Naive thymus-derived CD4-positive, alpha-beta T cell (primary cell): ENCODE measurements at regions of chr3 and their contacts with region 1.

Region 1: GRCh38 chr3:14791343-14791945 is 27.3 kb upstream of the FGD5 start:
- DNase-seq: peak; percentile 23 to 54 (median 33)
- ATAC-seq: peak; percentile 62
- H3K4me3 ChIP-seq: no peak overlapping the region
- H3K4me3 Mint-ChIP-seq: no peak overlapping the region
- H3K27ac ChIP-seq: no peak overlapping the region
- H3K27ac Mint-ChIP-seq: peak overlapping the region in 2 of 9 donors; percentile 14 to 49
- H3K4me1 ChIP-seq: no peaks in the 10 kb centered on the region
- H3K4me1 Mint-ChIP-seq: peaks cover 0 to 4% (median 0%) of the 10 kb centered on the region in 7 donors
- H3K27me3 ChIP-seq: no peaks in the 10 kb centered on the region
- H3K27me3 Mint-ChIP-seq: peaks cover 7 to 29% (median 26%) of the 10 kb centered on the region in 5 donors

Region 2: GRCh38 chr3:14626881-14627411 is 164.5 kb before region 1 on chr3:
- CTCF ChIA-PET with region 1: no interaction called
- POLR2A ChIA-PET with region 1: no interaction called
- intact Hi-C with region 1: no loop called
- DNase-seq: no peak
- ATAC-seq: no peak
- H3K4me3 ChIP-seq: no peak overlapping the region
- H3K4me3 Mint-ChIP-seq: no peak overlapping the region
- H3K27ac ChIP-seq: no peak overlapping the region
- H3K27ac Mint-ChIP-seq: no peak overlapping the region
- H3K4me1 ChIP-seq: no peaks in the 10 kb centered on the region
- H3K4me1 Mint-ChIP-seq: no peaks in the 10 kb centered on the region
- H3K27me3 ChIP-seq: no peaks in the 10 kb centered on the region
- H3K27me3 Mint-ChIP-seq: peaks cover 0 to 12% (median 5%) of the 10 kb centered on the region in 5 donors

Region 3: DNA sequence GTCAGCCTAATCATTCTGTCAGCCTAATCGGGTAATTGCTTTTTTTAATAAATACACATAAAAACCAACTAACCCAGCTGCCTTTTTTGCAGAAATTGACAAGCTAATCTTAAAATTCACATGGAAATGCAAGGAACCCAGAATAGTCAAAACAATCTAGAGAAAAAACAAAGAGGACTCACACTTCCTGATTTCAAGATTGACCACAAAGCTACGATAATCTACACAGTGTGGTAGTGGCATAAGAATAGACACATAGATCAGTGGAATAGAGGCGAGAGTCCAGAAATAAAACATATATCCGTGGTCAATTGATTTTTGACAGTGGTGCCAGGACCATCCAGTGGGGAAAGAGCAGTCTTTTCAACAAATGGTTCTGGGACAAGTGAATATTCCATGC is 118.9 kb before region 1 on chr3:
- CTCF ChIA-PET with region 1: no interaction called
- POLR2A ChIA-PET with region 1: no interaction called
- intact Hi-C with region 1: loop called (anchors 2 to 10 kb)
- DNase-seq: no peak
- ATAC-seq: no peak
- H3K4me3 ChIP-seq: no peak overlapping the region
- H3K4me3 Mint-ChIP-seq: no peak overlapping the region
- H3K27ac ChIP-seq: no peak overlapping the region
- H3K27ac Mint-ChIP-seq: peak overlapping the region in 3 of 9 donors; percentile 22 to 41 (median 34)
- H3K4me1 ChIP-seq: no peaks in the 10 kb centered on the region
- H3K4me1 Mint-ChIP-seq: no peaks in the 10 kb centered on the region
- H3K27me3 ChIP-seq: no peaks in the 10 kb centered on the region
- H3K27me3 Mint-ChIP-seq: no peaks in the 10 kb centered on the region